Astrocyte of the cerebellum (primary cell): ENCODE measurements at regions of chr5 and their contacts with region 1.

Region 1: GRCh38 chr5:112860929-112861637 is at the start of gene SRP19:
- DNase-seq: peak; percentile 96
- H3K4me3 ChIP-seq: peak within 1 kb of the TSS; percentile 59
- CTCF ChIP-seq: no peak

Region 2: DNA sequence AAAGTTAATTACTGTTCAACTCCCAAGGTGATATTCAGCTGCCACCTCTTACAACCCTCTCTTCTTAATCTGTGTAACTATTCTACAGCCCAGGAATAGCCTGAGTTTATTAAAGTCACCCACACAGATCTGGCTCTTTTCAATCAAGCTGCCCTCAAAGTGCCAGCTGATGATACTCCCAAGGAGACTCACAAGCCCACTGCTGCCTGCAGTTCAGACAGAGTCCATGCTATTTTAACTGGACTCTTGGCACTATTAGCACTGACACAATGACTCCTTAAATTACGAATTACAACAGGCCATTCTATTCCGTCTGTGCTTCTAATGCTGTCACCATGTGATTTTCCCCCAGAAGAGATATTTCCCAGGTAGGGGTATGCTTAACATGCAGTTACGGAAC is 34.6 kb after region 1 on chr5:
- in situ Hi-C with region 1: loop called (anchors 5 kb)
- DNase-seq: no peak
- H3K4me3 ChIP-seq: no peak overlapping the region
- CTCF ChIP-seq: no peak